ENCODE measurements at regions of chr15 and their contacts with region 1.

Region 1: DNA sequence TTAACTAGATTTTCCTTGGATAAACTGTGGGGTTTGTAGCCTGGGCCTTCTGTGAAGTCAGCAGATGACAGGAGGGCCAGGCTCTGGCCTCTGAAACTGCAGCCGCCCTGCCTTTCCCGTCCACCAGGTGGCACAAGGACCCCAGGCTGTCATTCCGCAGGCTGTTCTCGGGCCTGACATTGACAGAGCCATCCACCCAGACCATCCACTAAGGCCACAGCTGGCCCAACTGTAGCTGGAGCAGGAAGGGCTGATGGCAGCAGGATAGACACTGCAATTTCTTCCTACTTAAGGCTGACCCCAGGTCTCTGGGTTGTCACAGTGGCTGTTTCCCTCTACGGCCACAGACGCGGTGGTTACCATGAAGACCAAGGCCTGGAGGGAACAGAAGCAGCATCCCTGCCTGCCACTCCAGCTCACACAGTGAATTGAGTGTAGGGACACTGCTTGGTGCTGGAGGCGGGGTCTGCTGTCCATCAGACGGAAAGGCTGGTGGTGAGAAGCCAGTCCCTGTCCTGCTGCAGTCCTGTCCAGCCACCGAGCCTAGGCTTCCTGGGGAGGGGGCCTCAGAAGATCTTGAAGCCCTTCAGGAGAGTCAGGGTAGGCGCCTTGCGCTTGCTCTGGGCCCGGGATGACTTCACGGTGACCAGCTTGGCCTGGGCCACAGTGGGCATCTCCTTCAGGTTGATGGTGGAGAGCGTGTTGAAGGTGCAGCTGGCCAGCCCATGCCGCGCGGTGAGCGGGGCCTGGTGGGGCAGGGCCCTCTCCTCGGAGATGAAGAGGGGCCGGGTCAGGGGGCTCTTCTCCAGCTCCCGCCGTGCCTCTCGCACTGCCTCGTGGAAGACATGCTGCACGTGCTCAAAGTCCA is 9.4 kb downstream of the SLC51B start:
- DNase-seq: peak; percentile 62 to 92
- H3K4me3 ChIP-seq: no peak overlapping the region
- CTCF ChIP-seq: peak in 1 of 3 donors; percentile 51
- POLR2A ChIP-seq: no peak

Region 2: GRCh38 chr15:65101411-65101890 is 46.9 kb after region 1 on chr15:
- intact Hi-C with region 1: loop called (anchors 5 kb)
- DNase-seq: peak in 1 of 2 donors; percentile 90
- H3K4me3 ChIP-seq: no peak overlapping the region
- CTCF ChIP-seq: no peak
- POLR2A ChIP-seq: no peak

Region 3: GRCh38 chr15:65184868-65185738 is 130.5 kb after region 1 on chr15 and contains the start of gene CLPX:
- intact Hi-C with region 1: no loop called
- DNase-seq: peak; percentile 91 to 98
- H3K4me3 ChIP-seq: peak within 1 kb of the TSS; percentile 98
- CTCF ChIP-seq: no peak
- POLR2A ChIP-seq: peak in 1 of 2 donors; percentile 24
- total RNA-seq, gene CLPX: 74.5 to 110 (median 91.8) TPM